ENCODE measurements at regions of chr4 and their contacts with region 1.

Region 1: DNA sequence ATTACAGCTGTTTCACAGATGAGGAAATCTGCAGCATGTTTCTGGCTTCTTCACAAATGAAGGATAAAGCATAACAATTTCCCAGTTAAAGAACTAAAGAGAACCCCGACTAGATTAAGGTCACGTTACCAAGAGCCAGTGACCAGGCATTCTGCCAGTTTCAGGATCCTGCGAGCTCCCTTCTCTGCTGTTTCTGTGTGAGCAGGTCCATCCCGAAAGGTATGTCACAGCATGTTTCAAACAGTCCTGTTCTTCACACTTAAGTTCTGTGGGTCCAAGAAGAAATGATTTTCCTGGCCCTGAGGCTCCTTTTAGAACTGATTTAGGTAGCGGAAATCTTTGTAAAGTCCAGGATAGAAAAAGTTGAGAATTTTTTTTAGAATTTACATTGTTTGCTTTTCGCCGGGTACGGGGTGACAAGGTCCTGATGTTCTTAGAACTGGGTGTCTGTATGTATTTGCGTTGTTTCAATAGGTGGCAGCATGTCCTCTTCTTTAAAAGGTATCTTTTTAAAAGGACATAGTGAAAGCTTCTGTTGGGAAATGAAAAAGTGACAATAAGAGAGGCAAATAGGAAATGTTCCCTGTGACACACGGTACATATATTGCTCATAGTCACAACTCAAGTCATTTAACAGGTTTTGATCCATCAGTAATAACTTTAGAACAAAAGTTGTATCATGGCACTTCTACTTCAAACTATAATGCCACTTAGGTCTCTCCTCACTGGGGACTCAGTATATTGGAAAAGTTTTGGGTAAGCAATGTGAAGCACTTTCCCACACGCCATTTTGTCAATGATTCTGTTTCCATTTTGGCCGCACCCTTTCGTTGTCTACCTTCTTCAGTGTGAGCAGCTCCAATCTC is 18.4 kb downstream of the IL21 start:
- DNase-seq: peak; percentile 73
- H3K4me3 Mint-ChIP-seq: peak overlapping the region; percentile 72
- H3K27ac Mint-ChIP-seq: peak overlapping the region; percentile 77
- H3K4me1 Mint-ChIP-seq: peaks cover 28% of the 10 kb centered on the region
- H3K27me3 Mint-ChIP-seq: no peaks in the 10 kb centered on the region

Region 2: GRCh38 chr4:122383341-122383740 is 219.2 kb before region 1 on chr4:
- intact Hi-C with region 1: no loop called
- DNase-seq: no peak
- H3K4me3 Mint-ChIP-seq: no peak overlapping the region
- H3K27ac Mint-ChIP-seq: no peak overlapping the region
- H3K4me1 Mint-ChIP-seq: no peaks in the 10 kb centered on the region
- H3K27me3 Mint-ChIP-seq: no peaks in the 10 kb centered on the region

Region 3: DNA sequence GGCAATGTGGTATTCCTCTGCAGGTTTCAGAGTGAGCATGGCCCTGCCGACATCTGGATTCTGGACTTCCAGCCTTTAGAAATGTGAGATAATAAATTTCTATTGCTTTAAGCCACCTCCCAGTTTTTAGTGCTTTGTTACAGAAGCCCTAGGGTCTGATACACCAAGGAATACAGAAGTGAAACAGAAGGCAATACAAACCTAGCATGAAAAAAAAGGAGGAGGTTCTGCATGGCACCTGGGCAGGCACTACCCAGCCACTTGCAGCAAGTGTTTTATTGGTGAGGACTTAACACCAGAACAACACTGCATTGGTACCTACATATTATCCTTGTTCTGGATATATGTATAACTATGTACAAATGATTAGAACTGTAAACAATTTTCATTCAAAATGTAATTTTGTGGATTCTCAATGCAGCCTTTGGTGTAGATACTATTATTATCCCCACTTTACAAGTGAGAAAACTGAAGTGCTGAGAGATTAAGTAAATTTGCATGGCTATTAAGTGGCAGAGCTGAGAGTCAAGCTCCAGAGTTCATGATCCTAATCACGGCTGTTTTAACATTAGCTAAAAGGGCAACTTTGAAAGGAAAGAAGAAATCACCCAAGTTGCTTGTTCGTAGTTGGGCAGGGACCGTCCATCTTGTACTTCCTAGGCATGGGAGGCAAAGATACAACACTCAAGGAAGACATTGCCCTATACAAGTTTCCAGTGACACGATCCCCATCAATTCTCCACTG is 53.5 kb before region 1 on chr4:
- intact Hi-C with region 1: no loop called
- DNase-seq: no peak
- H3K4me3 Mint-ChIP-seq: peak overlapping the region; percentile 63
- H3K27ac Mint-ChIP-seq: peak overlapping the region; percentile 86
- H3K4me1 Mint-ChIP-seq: peaks cover 62% of the 10 kb centered on the region
- H3K27me3 Mint-ChIP-seq: no peaks in the 10 kb centered on the region

Region 4: DNA sequence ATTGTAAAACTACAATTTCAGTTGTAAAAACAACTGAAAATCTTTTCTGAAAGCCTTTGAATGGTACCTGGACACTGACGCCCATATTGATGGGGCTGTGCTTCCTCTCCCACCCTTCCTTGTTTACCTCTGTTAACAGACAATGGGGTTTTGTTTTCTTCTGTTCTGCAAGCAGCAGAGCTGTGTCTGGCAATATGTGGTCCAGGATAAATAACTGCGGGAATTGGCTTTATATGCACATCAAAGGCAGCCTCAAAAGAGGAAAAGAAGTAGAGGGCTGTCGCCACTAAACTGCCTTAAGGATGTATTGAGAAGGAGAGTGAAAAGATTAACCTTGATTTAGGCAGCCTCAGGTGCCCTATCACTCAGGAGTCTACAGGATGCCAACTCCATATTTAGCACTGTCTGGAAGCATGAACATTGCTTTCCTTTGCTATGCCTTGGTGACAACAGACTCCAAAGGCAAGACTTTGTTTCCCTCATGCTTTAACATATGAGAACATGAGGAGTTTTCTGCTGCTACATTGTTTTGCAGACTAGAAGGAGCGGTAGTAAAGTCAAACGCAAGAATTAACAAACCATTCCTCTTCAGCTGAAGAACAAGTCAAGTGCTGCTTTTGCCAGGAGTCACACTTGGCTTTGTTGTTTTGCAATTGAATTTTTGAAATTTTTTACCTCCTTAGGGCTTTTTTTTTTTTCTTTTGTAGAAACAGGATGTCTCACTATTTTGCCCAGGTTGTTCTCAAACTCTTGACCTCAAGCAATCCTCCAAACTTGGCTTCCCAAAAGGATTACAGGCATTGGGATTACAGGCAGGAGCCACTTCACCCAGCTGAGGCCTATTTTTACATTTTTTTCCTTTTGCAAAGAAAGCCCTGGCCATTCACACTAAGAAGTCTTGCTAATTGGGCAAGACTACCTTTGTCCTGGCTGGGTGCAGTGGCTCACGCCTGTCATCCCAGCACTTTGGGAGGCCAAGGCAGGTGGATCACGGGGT is 15.4 kb after region 1 on chr4:
- intact Hi-C with region 1: loop called (anchors 1 kb)
- DNase-seq: peak; percentile 58
- H3K4me3 Mint-ChIP-seq: peak overlapping the region; percentile 89
- H3K27ac Mint-ChIP-seq: peak overlapping the region; percentile 91
- H3K4me1 Mint-ChIP-seq: peaks cover 50% of the 10 kb centered on the region
- H3K27me3 Mint-ChIP-seq: no peaks in the 10 kb centered on the region

Region 5: DNA sequence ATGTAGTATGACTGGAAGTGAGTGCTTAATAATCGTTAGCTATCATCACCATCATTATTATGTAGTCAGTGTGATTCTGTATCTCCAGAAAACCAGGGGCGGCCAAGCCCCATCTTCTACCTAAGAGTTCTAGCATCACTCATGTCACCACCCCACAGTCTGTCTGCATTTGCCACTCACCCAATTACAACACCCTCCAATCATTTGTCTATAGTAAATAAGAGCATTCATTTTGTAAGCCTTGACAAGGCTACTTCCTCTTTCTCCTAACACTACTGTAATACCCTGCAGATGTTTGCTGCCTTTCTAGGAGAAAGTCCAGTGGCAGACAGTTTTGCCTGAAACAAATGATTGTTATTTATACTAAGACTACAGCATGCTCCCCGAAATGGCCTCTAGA is 34.2 kb after region 1 on chr4:
- intact Hi-C with region 1: no loop called
- DNase-seq: no peak
- H3K4me3 Mint-ChIP-seq: no peak overlapping the region
- H3K27ac Mint-ChIP-seq: no peak overlapping the region
- H3K4me1 Mint-ChIP-seq: peaks cover 25% of the 10 kb centered on the region
- H3K27me3 Mint-ChIP-seq: no peaks in the 10 kb centered on the region

Region 6: DNA sequence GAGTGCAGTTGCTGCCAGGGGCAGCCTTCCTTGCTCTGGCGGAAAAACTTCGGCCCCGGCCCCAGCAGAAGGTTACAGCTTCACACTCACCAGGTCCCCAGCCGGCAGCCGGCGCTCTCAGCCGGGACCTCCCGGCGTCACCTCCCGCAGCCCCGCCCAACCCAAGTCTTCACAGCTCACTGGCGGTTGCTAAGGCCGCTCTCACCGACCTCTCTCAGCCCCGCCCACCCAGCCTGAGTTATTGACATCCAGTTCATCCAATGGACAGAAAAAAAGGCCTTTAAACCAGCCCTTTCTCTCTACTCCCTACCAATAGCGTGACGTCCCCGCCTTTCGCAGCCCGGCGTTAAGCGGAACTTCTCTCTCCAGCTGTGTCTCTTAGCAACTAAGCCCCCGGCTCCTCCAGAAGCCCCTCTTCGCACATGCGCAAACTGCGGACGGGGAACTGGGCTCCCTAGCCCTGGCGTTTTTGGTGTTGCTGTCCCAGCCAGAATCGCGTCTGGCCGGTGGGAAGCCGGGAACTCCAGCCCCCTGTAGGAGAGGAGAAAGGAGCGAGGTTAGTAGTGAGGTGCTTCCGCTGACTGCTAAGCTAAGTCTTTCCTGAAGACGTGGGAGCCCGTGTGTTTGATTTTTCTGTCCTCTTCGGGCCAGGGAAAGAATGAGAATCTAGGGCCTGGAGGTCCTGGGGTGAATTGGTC is 130.0 kb after region 1 on chr4 and contains the start of gene BBS12:
- intact Hi-C with region 1: loop called (anchors 1 kb)
- DNase-seq: peak; percentile 100
- H3K4me3 Mint-ChIP-seq: peak within 1 kb of the TSS; percentile 94
- H3K27ac Mint-ChIP-seq: peak within 1 kb of the TSS; percentile 96
- H3K4me1 Mint-ChIP-seq: peaks cover 25% of the 10 kb centered on the region
- H3K27me3 Mint-ChIP-seq: no peaks in the 10 kb centered on the region
- total RNA-seq, gene BBS12: 3.8 and 4.7 TPM in 2 replicates

Region 7: DNA sequence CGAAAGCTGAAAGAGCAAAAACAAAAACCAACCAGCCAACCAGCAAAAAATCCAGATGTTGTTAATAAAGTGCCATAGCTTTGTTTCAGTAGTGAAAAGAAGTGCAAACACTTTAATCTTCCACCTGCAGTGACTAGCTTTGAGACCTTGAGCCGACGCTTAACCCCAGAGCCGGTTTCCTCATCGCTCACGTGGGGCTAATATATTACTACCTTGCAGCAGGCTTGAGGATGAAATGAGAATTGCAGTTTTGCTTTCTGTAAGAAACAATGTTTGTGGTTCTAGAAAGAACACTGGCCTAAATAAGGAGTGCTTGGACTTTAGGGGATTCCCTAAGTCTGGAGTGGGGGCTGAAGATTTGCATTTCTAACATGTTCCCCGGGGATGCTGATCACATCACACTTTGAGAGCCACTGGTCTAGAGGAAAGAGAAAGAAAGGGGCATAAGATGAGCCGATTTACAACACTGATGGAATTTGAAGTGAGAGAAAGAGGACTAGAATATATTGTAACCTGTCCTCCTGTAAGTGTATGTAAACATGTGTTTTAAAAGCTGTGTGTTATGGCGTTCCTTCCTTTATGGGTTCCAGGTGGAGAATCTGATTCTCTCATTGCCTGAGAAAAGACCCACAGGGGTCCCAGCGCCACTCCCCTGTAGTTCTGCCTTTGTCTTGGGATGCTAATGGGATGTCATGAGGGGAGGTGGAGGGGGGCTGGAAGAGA is 225.5 kb after region 1 on chr4:
- intact Hi-C with region 1: loop called (anchors 5 kb)
- DNase-seq: peak; percentile 79
- H3K4me3 Mint-ChIP-seq: peak overlapping the region; percentile 83
- H3K27ac Mint-ChIP-seq: peak overlapping the region; percentile 94
- H3K4me1 Mint-ChIP-seq: peaks cover 24% of the 10 kb centered on the region
- H3K27me3 Mint-ChIP-seq: peaks cover 64% of the 10 kb centered on the region

Region 8: DNA sequence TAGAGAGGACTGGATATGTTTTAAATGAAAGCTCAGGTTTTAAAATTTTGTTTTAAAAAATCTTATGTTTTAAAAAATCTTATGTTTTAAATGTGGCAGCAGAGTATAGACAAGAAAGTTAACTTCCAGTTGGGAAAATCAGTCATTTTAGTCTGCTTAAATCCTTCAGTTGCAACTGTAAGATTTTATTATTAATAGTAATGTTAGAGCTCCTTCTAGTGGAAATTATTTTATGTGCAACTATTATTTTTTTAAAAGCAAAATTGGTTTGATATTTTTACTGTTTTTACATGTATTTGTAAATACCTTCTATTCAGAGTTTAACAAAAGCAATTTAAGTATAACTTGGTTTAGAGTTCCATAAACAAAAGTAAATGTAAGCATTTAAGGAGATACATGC is 328.4 kb after region 1 on chr4:
- intact Hi-C with region 1: loop called (anchors 1 kb)
- DNase-seq: no peak
- H3K4me3 Mint-ChIP-seq: no peak overlapping the region
- H3K27ac Mint-ChIP-seq: no peak overlapping the region
- H3K4me1 Mint-ChIP-seq: peaks cover 29% of the 10 kb centered on the region
- H3K27me3 Mint-ChIP-seq: no peaks in the 10 kb centered on the region

Measured in activated CD4-positive, alpha-beta T cell treated with anti-CD3 and anti-CD28 coated beads, Interleukin-2, amount 10 ng/mL, durations not matched to agents 24 days and 14 days (primary cell).